ENCODE measurements at regions of chr14 and their contacts with region 1.

Region 1: GRCh38 chr14:77097700-77098528 is at the start of gene CIPC:
- DNase-seq: peak; percentile 98
- CTCF ChIP-seq: no peak

Region 2: GRCh38 chr14:77076113-77076631 is 21.7 kb before region 1 on chr14:
- CTCF ChIA-PET with region 1: interaction called, 108 read pairs
- POLR2A ChIA-PET with region 1: no interaction called
- DNase-seq: no peak
- CTCF ChIP-seq: no peak

Region 3: DNA sequence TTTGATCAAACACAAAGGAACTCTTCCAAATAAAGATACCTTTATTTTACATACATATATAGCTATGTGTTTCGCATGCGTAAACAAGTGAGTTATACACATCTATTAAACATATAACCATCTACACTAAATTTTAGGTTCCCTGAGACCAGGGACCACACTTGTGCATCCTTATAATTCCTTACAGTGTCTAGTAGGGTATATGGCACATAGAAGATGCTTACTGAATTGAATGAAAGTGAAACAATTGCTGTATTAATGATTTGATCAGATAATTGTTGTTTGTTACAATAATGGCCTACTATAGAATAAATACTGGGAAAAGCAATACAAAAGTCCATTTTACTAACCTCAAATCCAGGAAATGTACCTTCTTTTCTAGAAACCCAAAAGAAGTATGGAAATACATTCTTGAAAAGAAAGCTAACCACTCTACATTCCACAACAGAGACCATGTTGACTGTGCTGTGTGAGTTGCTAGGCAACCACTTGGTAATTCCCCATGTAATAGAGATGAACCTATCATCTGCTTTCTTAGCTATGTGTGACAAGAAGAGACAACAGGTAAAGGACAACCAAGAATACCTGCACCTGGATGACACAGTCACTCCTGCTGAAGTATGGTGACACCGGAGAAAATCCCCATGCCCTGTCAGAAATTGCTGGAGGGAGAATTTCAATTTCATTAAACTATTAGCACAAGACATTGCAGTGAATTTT is 11.7 kb before region 1 on chr14:
- CTCF ChIA-PET with region 1: interaction called, 108 read pairs
- POLR2A ChIA-PET with region 1: no interaction called
- DNase-seq: peak; percentile 46
- CTCF ChIP-seq: no peak

Region 4: DNA sequence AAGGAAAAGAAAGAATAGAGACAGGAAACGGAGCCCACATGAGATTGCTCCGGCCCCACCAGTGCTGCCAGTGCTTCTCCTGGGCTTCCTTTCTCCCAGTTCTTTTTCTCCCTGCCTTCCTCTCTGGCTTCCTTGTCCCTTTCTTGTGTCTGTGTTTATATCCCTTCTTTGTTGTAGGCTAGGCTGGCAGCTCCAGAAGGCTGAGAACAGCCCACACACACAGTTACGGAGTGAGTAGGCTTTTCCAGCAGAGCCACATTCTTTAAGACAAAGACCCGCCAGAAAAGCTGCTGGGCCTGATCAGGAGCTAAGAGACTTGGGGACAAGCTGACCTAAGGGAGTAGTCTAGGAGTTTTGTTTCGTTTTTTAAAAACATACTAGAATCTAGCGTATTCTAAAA is 13.1 kb after region 1 on chr14:
- CTCF ChIA-PET with region 1: interaction called, 10 read pairs
- POLR2A ChIA-PET with region 1: interaction called, 3 read pairs
- DNase-seq: no peak
- CTCF ChIP-seq: no peak

Region 5: GRCh38 chr14:77124345-77125280 is 26.7 kb after region 1 on chr14:
- CTCF ChIA-PET with region 1: interaction called, 68 read pairs
- POLR2A ChIA-PET with region 1: no interaction called
- DNase-seq: peak; percentile 79
- CTCF ChIP-seq: peak; percentile 89